ENCODE measurements at regions of chr4 and their contacts with region 1.

Region 1: DNA sequence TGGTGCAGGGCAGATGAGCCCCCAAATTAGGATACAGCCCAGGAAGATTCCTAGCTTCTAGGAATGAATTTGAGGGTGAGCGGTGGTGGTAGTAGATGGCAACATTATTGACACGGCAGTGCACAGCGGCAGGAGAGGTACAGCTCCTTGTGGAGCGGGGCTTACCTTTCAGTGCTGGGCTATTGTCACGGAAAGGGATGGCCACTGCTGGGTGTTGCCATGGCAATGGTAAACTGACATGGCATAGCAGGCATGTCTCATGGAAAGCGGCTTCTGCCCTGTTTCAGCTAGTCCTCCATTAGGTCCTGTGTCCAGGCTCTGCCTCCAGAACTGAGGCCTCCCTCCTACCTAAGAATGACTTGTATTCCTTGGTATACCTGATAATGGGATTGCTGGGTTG is 81.8 kb upstream of the WDR1 start:
- DNase-seq: no peak

Region 2: DNA sequence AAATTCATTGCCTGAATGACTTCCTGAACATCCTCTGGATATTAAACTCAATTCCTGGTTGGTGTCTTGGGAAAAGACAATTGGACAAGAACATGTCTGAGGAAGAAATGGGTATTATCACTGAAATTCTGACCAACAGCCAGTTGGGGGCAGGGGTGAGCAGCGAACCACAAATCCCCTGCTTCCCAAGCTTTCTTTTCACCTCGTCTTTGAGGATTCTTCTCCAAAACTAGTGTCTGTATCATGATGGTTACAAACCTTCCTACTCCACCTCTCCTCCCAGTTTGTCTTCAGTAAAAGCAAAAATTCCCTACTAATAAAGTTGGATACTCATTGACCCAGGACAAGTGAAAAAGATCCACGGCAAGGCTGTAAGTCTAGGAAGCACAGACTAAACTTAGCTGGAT is 33.5 kb before region 1 on chr4:
- in situ Hi-C with region 1: loop called (anchors 5 kb)
- DNase-seq: peak; percentile 59

Measured in G401 (cell line).